ENCODE measurements at regions of chr5 and their contacts with region 1.

Region 1: GRCh38 chr5:71782771-71783770 is 64.0 kb downstream of the CARTPT start:
- DNase-seq: peak; percentile 85
- ATAC-seq: peak; percentile 97
- H3K4me3 Mint-ChIP-seq: peak overlapping the region; percentile 29
- H3K27ac Mint-ChIP-seq: peak overlapping the region; percentile 62
- H3K4me1 Mint-ChIP-seq: peaks cover 26% of the 10 kb centered on the region
- H3K27me3 Mint-ChIP-seq: peaks cover 4% of the 10 kb centered on the region

Region 2: GRCh38 chr5:71887680-71888079 is 104.6 kb after region 1 on chr5:
- CTCF ChIA-PET with region 1: no interaction called
- POLR2A ChIA-PET with region 1: no interaction called
- intact Hi-C with region 1: loop called in 1 of 2 experiments (anchors 10 kb)
- DNase-seq: peak; percentile 8
- ATAC-seq: peak; percentile 100
- H3K4me3 Mint-ChIP-seq: peak overlapping the region; percentile 20
- H3K27ac Mint-ChIP-seq: no peak overlapping the region
- H3K4me1 Mint-ChIP-seq: peaks cover 2% of the 10 kb centered on the region
- H3K27me3 Mint-ChIP-seq: peaks cover 13% of the 10 kb centered on the region

Region 3: DNA sequence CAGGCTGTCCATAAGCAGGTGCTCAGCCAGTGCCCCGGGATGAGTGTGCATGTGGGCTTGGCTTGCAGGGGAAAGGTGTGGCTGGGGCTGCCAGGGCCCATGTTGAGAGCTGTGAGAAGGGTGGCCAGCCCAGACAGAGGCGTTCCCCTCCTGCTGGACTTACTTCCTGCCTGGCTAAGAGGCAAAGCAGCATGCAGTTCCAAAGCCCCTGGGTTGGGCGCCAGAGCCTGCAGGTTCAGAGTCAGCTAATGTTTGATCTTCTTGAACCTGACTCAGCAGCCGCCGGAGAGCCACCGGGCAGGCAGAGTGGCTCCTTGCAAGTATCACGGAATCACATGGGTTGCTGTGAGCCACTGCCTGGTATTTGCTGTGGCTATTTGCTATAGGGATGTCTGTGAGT is 155.8 kb after region 1 on chr5:
- CTCF ChIA-PET with region 1: no interaction called
- POLR2A ChIA-PET with region 1: no interaction called
- intact Hi-C with region 1: no loop called
- DNase-seq: no peak
- ATAC-seq: no peak
- H3K4me3 Mint-ChIP-seq: no peak overlapping the region
- H3K27ac Mint-ChIP-seq: no peak overlapping the region
- H3K4me1 Mint-ChIP-seq: no peaks in the 10 kb centered on the region
- H3K27me3 Mint-ChIP-seq: peaks cover 12% of the 10 kb centered on the region

Region 4: GRCh38 chr5:72018146-72018803 is 235.2 kb after region 1 on chr5:
- CTCF ChIA-PET with region 1: interaction called, 10 read pairs
- POLR2A ChIA-PET with region 1: no interaction called
- intact Hi-C with region 1: loop called (anchors 1 kb)
- DNase-seq: peak; percentile 81
- ATAC-seq: peak; percentile 55
- H3K4me3 Mint-ChIP-seq: no peak overlapping the region
- H3K27ac Mint-ChIP-seq: no peak overlapping the region
- H3K4me1 Mint-ChIP-seq: peaks cover 5% of the 10 kb centered on the region
- H3K27me3 Mint-ChIP-seq: peaks cover 30% of the 10 kb centered on the region

Region 5: DNA sequence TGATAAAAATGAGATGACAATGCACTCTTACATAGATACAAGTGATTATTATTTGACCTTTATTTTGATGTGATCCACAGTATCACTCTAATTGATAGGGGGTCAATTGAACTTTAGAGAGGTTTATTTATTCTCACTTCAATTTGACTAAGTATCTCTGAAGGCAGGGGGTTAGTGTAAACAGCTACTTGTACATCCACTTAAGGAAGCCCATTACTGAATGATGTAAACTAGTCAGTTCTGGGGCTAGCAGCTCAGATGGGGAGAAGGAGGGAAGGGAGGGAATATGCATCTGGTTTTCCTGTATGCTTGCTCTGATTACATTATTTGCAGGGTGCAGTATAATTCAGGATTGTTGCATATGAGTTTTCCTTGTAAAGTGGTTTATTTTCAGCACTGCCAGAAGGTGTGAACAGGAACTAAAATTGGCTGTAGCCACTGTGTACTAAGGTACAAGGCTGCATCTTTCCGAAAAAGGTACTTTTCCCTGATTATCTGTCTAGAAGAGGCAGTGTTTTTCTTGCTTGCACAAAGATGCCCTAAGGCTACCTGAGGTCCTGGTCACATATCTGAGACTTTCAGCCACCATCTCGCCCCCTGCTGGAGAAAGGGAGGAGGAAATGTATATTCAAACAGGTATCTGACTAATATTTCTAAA is 485.8 kb after region 1 on chr5:
- CTCF ChIA-PET with region 1: no interaction called
- POLR2A ChIA-PET with region 1: no interaction called
- intact Hi-C with region 1: loop called in 1 of 2 experiments (anchors 10 kb)
- DNase-seq: peak; percentile 63
- ATAC-seq: no peak
- H3K4me3 Mint-ChIP-seq: no peak overlapping the region
- H3K27ac Mint-ChIP-seq: no peak overlapping the region
- H3K4me1 Mint-ChIP-seq: peaks cover 2% of the 10 kb centered on the region
- H3K27me3 Mint-ChIP-seq: no peaks in the 10 kb centered on the region

Measured in activated CD4-positive, alpha-beta T cell treated with anti-CD3 and anti-CD28 coated beads for 36 hours (primary cell).